ENCODE measurements at regions of chr4 and their contacts with region 1.

Region 1: GRCh38 chr4:135120195-135120594 is 918.6 kb upstream of the PABPC4L start:
- DNase-seq: no peak
- H3K4me3 ChIP-seq: no peak overlapping the region
- H3K27ac ChIP-seq: no peak overlapping the region
- H3K4me1 ChIP-seq: no peaks in the 10 kb centered on the region
- CTCF ChIP-seq: no peak

Region 2: DNA sequence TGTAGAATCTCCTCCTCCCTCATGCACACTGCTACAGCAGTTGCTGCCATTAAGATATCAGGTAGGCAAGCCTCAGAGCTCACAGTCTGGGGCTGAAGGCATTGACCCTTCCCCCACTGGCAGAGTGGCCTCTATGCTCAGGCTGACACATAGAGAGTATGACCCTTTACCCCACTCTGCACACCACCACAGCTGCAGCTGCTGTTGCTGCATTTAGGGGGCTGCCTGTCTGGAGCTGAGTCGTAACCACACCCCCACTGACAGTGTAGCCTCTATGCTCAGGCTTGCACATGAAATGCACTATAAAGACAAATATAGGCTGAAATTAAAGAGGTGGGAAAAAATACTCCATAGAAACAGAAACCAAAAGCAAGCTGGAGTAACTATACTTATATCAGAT is 629.3 kb before region 1 on chr4:
- CTCF ChIA-PET with region 1: no interaction called
- POLR2A ChIA-PET with region 1: no interaction called
- intact Hi-C with region 1: loop called (anchors 10 kb)
- DNase-seq: no peak
- H3K4me3 ChIP-seq: no peak overlapping the region
- H3K27ac ChIP-seq: no peak overlapping the region
- H3K4me1 ChIP-seq: no peaks in the 10 kb centered on the region
- CTCF ChIP-seq: no peak

Region 3: DNA sequence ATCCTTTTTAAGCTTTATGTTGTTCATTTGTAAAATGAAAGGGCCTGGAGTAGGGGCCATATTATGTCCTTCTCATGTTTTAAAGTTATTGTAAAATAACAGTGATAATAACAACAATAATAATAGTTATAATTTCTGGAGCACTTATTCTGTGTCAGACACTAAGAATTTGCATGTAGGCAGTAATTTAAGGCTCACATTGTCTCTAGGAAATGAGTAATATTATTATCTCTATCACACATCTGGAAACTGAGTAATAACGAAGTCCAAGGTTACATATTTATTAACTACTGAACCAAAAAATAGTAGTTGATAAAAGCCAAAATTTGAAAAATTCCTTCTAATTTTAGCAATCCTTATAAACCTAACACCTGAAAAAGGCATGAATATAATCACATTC is 397.9 kb before region 1 on chr4:
- CTCF ChIA-PET with region 1: no interaction called
- POLR2A ChIA-PET with region 1: no interaction called
- intact Hi-C with region 1: no loop called
- DNase-seq: no peak
- H3K4me3 ChIP-seq: no peak overlapping the region
- H3K27ac ChIP-seq: no peak overlapping the region
- H3K4me1 ChIP-seq: no peaks in the 10 kb centered on the region
- CTCF ChIP-seq: no peak

Region 4: GRCh38 chr4:135186002-135186401 is 65.8 kb after region 1 on chr4:
- CTCF ChIA-PET with region 1: no interaction called
- POLR2A ChIA-PET with region 1: no interaction called
- intact Hi-C with region 1: no loop called
- DNase-seq: no peak
- H3K4me3 ChIP-seq: no peak overlapping the region
- H3K27ac ChIP-seq: no peak overlapping the region
- H3K4me1 ChIP-seq: no peaks in the 10 kb centered on the region
- CTCF ChIP-seq: no peak